ENCODE measurements at regions of chr6 and their contacts with region 1.

Region 1: GRCh38 chr6:118283766-118284165 is 264.3 kb upstream of the PLN start:
- DNase-seq: peak; percentile 6
- H3K4me3 ChIP-seq: no peak overlapping the region
- H3K27me3 ChIP-seq: peaks cover 5% of the 10 kb centered on the region
- CTCF ChIP-seq: peak; percentile 78

Region 2: GRCh38 chr6:118171852-118172251 is 111.9 kb before region 1 on chr6:
- CTCF ChIA-PET with region 1: no interaction called
- POLR2A ChIA-PET with region 1: no interaction called
- DNase-seq: no peak
- H3K4me3 ChIP-seq: no peak overlapping the region
- H3K27me3 ChIP-seq: no peaks in the 10 kb centered on the region
- CTCF ChIP-seq: no peak

Region 3: DNA sequence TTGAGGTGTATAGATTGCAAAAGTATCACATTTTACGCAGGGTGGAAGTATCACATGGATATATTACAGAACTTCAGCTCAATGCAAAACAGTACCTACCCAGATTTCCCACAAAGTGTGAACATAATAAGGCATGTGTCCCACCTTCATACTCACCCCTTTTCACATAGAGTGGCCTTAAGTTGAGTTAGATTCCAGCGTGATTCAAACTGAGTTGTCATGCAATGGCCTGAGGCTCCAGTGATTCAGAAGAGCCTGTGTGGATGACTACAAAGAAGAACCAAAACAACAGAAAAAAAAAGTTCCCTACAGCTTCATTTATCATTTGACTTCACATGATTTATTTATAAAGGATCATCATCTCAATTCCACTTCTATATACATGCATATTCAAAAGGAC is 67.0 kb before region 1 on chr6:
- CTCF ChIA-PET with region 1: no interaction called
- POLR2A ChIA-PET with region 1: no interaction called
- DNase-seq: no peak
- H3K4me3 ChIP-seq: no peak overlapping the region
- H3K27me3 ChIP-seq: no peaks in the 10 kb centered on the region
- CTCF ChIP-seq: no peak

Region 4: GRCh38 chr6:118511930-118512715 is 228.4 kb after region 1 on chr6:
- CTCF ChIA-PET with region 1: interaction called, 10 read pairs
- POLR2A ChIA-PET with region 1: no interaction called
- DNase-seq: no peak
- H3K4me3 ChIP-seq: no peak overlapping the region
- H3K27me3 ChIP-seq: no peaks in the 10 kb centered on the region
- CTCF ChIP-seq: no peak

Region 5: GRCh38 chr6:118580585-118581419 is 297.0 kb after region 1 on chr6:
- CTCF ChIA-PET with region 1: interaction called, 75 read pairs
- POLR2A ChIA-PET with region 1: no interaction called
- DNase-seq: no peak
- H3K4me3 ChIP-seq: no peak overlapping the region
- H3K27me3 ChIP-seq: no peaks in the 10 kb centered on the region
- CTCF ChIP-seq: peak; percentile 61

Region 6: GRCh38 chr6:118780668-118781067 is 496.9 kb after region 1 on chr6:
- CTCF ChIA-PET with region 1: interaction called, 10 read pairs
- POLR2A ChIA-PET with region 1: no interaction called
- DNase-seq: no peak
- H3K4me3 ChIP-seq: no peak overlapping the region
- H3K27me3 ChIP-seq: peaks cover 5% of the 10 kb centered on the region; the same call in 1 of the 2 replicates
- CTCF ChIP-seq: no peak

Region 7: GRCh38 chr6:118800394-118801071 is 516.8 kb after region 1 on chr6:
- CTCF ChIA-PET with region 1: interaction called, 16 read pairs
- POLR2A ChIA-PET with region 1: no interaction called
- DNase-seq: peak; percentile 26
- H3K4me3 ChIP-seq: no peak overlapping the region
- H3K27me3 ChIP-seq: no peaks in the 10 kb centered on the region
- CTCF ChIP-seq: peak; percentile 90